ENCODE measurements at regions of chr15 and their contacts with region 1.

Region 1: GRCh38 chr15:78506971-78507830 is at the start of gene HYKK:
- DNase-seq: peak; percentile 97
- H3K4me3 ChIP-seq: peak within 1 kb of the TSS; percentile 64 to 89 (median 78)
- H3K27ac ChIP-seq: peak within 1 kb of the TSS; percentile 75 to 82 (median 80)
- H3K4me1 ChIP-seq: peaks cover 0 to 12% (median 8%) of the 10 kb centered on the region in 4 donors
- H3K27me3 ChIP-seq: no peaks in the 10 kb centered on the region
- CTCF ChIP-seq: peak in 1 of 4 experiments; percentile 13
- EP300 ChIP-seq: no peak
- POLR2A ChIP-seq: peak; percentile 32 to 54
- total RNA-seq, gene HYKK: 9.1 to 17.8 (median 15.0) TPM

Region 2: GRCh38 chr15:78315686-78316282 is 191.4 kb before region 1 on chr15:
- intact Hi-C with region 1: no loop called
- DNase-seq: peak; percentile 50
- H3K4me3 ChIP-seq: no peak overlapping the region
- H3K27ac ChIP-seq: no peak overlapping the region
- H3K4me1 ChIP-seq: no peaks in the 10 kb centered on the region
- H3K27me3 ChIP-seq: no peaks in the 10 kb centered on the region
- CTCF ChIP-seq: no peak
- EP300 ChIP-seq: no peak
- POLR2A ChIP-seq: no peak

Region 3: GRCh38 chr15:78540141-78540928 is 33.1 kb after region 1 on chr15 and contains the start of gene PSMA4:
- intact Hi-C with region 1: loop called (anchors 2 kb)
- DNase-seq: peak; percentile 96
- H3K4me3 ChIP-seq: peak within 1 kb of the TSS; percentile 73 to 88 (median 78)
- H3K27ac ChIP-seq: peak within 1 kb of the TSS; percentile 94 to 97 (median 96)
- H3K4me1 ChIP-seq: peaks cover 0 to 29% (median 16%) of the 10 kb centered on the region in 4 donors
- H3K27me3 ChIP-seq: no peaks in the 10 kb centered on the region
- CTCF ChIP-seq: peak in 2 of 4 experiments; percentile 33 to 44
- EP300 ChIP-seq: no peak
- POLR2A ChIP-seq: peak; percentile 75 to 90
- total RNA-seq, gene PSMA4: 90.8 to 173 (median 157) TPM

Region 4: GRCh38 chr15:78739996-78740903 is 233.0 kb after region 1 on chr15:
- intact Hi-C with region 1: no loop called
- DNase-seq: peak; percentile 63
- H3K4me3 ChIP-seq: no peak overlapping the region
- H3K27ac ChIP-seq: no peak overlapping the region
- H3K4me1 ChIP-seq: peaks cover 0 to 11% (median 0%) of the 10 kb centered on the region in 4 donors
- H3K27me3 ChIP-seq: no peaks in the 10 kb centered on the region
- CTCF ChIP-seq: peak in 1 of 4 experiments; percentile 17
- EP300 ChIP-seq: no peak
- POLR2A ChIP-seq: no peak

Measured in sigmoid colon (tissue), 7 donors.